CD8-positive, alpha-beta T cell (primary cell): ENCODE measurements at regions of chrX and their contacts with region 1.

Region 1: GRCh38 chrX:120452131-120452530 is 17.0 kb downstream of the LAMP2 start:
- DNase-seq: peak in 2 of 9 experiments; percentile 17 to 35
- ATAC-seq: no peak
- H3K4me3 ChIP-seq: no peak overlapping the region
- H3K4me3 Mint-ChIP-seq: no peak overlapping the region
- H3K27ac ChIP-seq: no peak overlapping the region
- H3K27ac Mint-ChIP-seq: peak overlapping the region; percentile 0
- H3K4me1 ChIP-seq: peaks cover 3% of the 10 kb centered on the region
- H3K4me1 Mint-ChIP-seq: peaks cover 20% of the 10 kb centered on the region
- H3K27me3 ChIP-seq: no peaks in the 10 kb centered on the region
- H3K27me3 Mint-ChIP-seq: no peaks in the 10 kb centered on the region
- CTCF ChIP-seq: no peak

Region 2: DNA sequence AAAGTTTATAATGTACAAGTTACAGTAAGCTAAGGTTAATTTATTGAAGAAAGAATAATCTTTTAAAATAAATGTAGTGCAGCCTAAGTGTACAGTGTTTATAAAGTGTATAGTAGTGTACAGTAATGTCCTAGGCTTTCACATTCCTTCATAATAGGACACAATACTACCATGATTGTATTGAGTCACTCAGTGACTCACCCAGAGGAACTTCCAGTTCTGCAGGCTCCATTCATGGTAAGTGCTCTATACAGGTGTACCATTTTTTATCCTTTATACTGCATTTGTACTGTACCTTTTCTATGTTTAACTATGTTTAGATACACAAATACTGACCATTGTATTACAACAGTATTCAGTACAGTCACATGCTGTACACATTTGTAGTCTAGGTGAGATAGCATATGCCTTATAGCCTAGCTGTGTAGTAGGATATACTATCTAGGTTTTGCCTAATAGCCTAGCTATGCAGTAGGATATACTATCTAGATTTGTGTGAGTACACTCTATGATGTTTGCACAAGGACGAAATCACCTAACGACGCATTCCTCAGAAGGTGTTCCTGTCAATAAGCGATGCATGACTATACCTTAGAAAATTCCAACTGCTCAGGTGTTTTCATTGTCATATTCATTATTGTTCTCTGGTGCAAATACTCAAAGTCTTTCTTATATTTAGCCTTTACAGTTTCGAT is 135.4 kb before region 1 on chrX:
- CTCF ChIA-PET with region 1: interaction called, 3 read pairs
- POLR2A ChIA-PET with region 1: no interaction called
- intact Hi-C with region 1: loop called in 1 of 2 experiments (anchors 5 kb)
- DNase-seq: no peak
- ATAC-seq: no peak
- H3K4me3 ChIP-seq: no peak overlapping the region
- H3K4me3 Mint-ChIP-seq: no peak overlapping the region
- H3K27ac ChIP-seq: no peak overlapping the region
- H3K27ac Mint-ChIP-seq: no peak overlapping the region
- H3K4me1 ChIP-seq: no peaks in the 10 kb centered on the region
- H3K4me1 Mint-ChIP-seq: no peaks in the 10 kb centered on the region
- H3K27me3 ChIP-seq: no peaks in the 10 kb centered on the region
- H3K27me3 Mint-ChIP-seq: peaks cover 18% of the 10 kb centered on the region
- CTCF ChIP-seq: no peak

Region 3: DNA sequence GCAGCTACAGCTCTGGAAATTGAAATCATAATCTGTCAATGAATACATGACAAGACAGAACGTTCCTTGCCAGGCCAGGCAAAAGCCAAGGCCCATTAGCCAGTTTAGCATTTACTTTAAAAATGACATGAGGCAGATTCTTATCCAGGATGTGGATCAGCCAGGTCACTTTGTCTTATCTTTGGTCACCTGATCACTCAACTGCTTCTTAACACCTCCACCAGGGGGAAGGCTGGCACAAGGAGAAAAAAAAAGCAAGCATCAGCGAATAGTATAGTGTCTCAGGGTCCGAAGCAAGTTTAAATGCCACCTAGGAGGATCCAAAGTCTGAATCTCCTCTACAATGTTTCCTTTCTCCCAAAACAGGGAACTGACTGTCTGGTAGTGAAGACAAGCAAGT is 71.4 kb before region 1 on chrX:
- CTCF ChIA-PET with region 1: interaction called, 12 read pairs
- POLR2A ChIA-PET with region 1: no interaction called
- intact Hi-C with region 1: loop called (anchors 1 to 5 kb)
- DNase-seq: peak in 4 of 9 experiments; percentile 11 to 69 (median 38)
- ATAC-seq: peak; percentile 59
- H3K4me3 ChIP-seq: no peak overlapping the region
- H3K4me3 Mint-ChIP-seq: no peak overlapping the region
- H3K27ac ChIP-seq: no peak overlapping the region
- H3K27ac Mint-ChIP-seq: no peak overlapping the region
- H3K4me1 ChIP-seq: no peaks in the 10 kb centered on the region
- H3K4me1 Mint-ChIP-seq: peaks cover 6% of the 10 kb centered on the region
- H3K27me3 ChIP-seq: no peaks in the 10 kb centered on the region
- H3K27me3 Mint-ChIP-seq: no peaks in the 10 kb centered on the region
- CTCF ChIP-seq: peak; percentile 49

Region 4: GRCh38 chrX:120419463-120419862 is 32.7 kb before region 1 on chrX:
- CTCF ChIA-PET with region 1: no interaction called
- POLR2A ChIA-PET with region 1: no interaction called
- intact Hi-C with region 1: no loop called
- DNase-seq: peak in 6 of 9 experiments; percentile 0 to 43 (median 12)
- ATAC-seq: peak; percentile 46
- H3K4me3 ChIP-seq: no peak overlapping the region
- H3K4me3 Mint-ChIP-seq: peak overlapping the region; percentile 29
- H3K27ac ChIP-seq: peak overlapping the region in 1 of 2 experiments; percentile 60
- H3K27ac Mint-ChIP-seq: peak overlapping the region; percentile 85
- H3K4me1 ChIP-seq: peaks cover 24% of the 10 kb centered on the region
- H3K4me1 Mint-ChIP-seq: peaks cover 21% of the 10 kb centered on the region
- H3K27me3 ChIP-seq: no peaks in the 10 kb centered on the region
- H3K27me3 Mint-ChIP-seq: no peaks in the 10 kb centered on the region
- CTCF ChIP-seq: no peak

Region 5: GRCh38 chrX:120477453-120477852 is 25.3 kb after region 1 on chrX:
- CTCF ChIA-PET with region 1: interaction called, 11 read pairs
- POLR2A ChIA-PET with region 1: interaction called, 4 read pairs
- intact Hi-C with region 1: no loop called
- DNase-seq: no peak
- ATAC-seq: no peak
- H3K4me3 ChIP-seq: no peak overlapping the region
- H3K4me3 Mint-ChIP-seq: no peak overlapping the region
- H3K27ac ChIP-seq: no peak overlapping the region
- H3K27ac Mint-ChIP-seq: no peak overlapping the region
- H3K4me1 ChIP-seq: no peaks in the 10 kb centered on the region
- H3K4me1 Mint-ChIP-seq: no peaks in the 10 kb centered on the region
- H3K27me3 ChIP-seq: no peaks in the 10 kb centered on the region
- H3K27me3 Mint-ChIP-seq: no peaks in the 10 kb centered on the region
- CTCF ChIP-seq: no peak